ENCODE measurements at regions of chr5 and their contacts with region 1.

Region 1: DNA sequence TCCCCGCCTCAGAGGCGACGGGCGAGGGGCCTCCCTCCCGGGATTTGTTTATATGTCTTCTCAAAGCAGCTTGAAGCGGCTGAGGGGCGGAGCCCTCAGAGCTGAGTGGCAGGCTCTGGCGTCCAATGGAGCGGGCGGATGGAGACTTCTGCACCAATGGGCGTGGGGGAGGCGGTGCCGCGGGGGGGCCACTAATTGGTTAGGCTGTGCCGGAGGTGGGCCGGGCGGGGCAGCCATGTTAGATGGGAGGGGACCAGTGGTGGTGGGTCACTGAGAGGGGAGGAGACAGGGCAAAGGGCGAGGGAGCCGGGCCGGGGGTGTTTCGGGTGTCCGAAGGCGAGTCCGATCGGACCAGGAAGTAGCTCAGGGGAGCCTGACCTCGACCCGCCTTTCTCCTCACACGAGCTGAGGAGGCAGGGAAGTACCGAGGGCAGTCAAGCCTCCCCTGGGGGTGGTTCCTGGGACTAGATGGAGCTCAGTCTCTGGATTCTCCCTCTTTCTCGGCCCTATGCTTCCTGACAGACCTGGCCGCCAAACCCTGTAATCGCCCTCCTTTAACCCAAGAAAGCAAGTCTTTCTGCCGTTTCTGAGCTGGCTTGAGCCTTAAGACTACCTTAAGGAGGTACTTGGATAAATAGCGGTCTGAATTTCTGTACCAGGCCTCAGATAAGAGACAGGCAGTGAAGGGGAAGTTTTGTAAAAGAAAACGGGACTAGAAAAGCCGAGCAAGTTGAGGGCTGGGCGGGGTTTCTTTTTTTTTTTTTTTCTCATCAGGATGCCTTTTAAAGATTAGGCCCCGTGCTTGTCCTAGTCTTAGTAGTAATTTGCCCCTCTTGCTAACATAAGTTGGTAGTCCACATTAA is 1.1 kb downstream of the CREBRF start:
- DNase-seq: peak; percentile 99
- ATAC-seq: peak; percentile 81
- H3K4me3 ChIP-seq: peak overlapping the region; percentile 81 to 97 (median 89)
- H3K4me3 Mint-ChIP-seq: peak overlapping the region; percentile 96
- H3K27ac ChIP-seq: peak overlapping the region; percentile 82 to 100
- H3K27ac Mint-ChIP-seq: peak overlapping the region; percentile 96
- H3K4me1 ChIP-seq: peaks cover 19 to 26% of the 10 kb centered on the region in 2 donors
- H3K4me1 Mint-ChIP-seq: peaks cover 47% of the 10 kb centered on the region
- H3K27me3 ChIP-seq: no peaks in the 10 kb centered on the region
- H3K27me3 Mint-ChIP-seq: no peaks in the 10 kb centered on the region
- CTCF ChIP-seq: no peak

Region 2: DNA sequence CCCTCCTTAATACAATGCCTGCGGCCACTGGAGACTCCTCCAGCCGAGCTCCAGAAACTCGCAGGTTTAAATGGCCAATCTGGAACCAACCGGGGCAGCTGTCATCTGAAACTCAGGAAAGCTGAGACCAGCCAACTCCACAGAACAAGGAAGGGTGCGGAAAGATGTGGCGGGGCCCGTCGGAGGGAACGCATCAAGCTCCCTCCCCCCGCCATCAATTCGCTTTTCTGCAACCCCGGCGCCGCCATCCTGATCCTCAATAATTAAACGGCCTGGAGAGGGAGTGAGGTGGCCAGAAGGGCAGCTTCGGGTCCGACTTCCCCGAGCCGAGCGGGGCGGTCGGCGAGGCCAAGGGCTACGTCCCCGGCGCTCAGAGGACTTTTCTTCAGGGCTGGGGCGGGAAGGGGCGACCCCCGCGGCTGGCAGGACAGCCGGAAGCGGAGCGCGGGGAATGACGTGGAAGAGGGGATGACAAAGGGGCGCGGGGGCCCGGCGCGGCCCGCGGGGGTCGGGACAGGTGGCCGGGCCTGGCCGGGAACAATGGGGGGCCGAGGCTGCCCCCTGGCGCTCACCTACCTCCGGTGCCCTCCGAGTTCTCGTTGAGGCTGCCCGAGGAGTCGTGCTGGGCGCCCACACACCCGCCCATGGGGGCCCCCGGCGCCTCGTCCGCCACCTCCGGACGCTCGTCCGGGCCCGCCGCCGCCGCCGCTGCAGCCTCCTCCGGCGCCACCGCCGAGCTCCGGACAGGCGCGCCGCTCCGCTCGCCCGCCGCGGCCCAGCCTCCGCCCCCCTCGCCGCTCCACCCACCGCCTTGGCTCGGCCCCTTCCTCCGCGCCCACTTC is 774.1 kb before region 1 on chr5 and contains the start of gene UBTD2:
- CTCF ChIA-PET with region 1: no interaction called
- POLR2A ChIA-PET with region 1: no interaction called
- intact Hi-C with region 1: loop called (anchors 5 kb)
- DNase-seq: peak; percentile 91
- ATAC-seq: peak; percentile 84
- H3K4me3 ChIP-seq: peak within 1 kb of the TSS; percentile 38 to 87 (median 79)
- H3K4me3 Mint-ChIP-seq: peak within 1 kb of the TSS; percentile 93
- H3K27ac ChIP-seq: peak within 1 kb of the TSS in 1 of 2 donors; percentile 74
- H3K27ac Mint-ChIP-seq: peak within 1 kb of the TSS; percentile 83
- H3K4me1 ChIP-seq: peaks cover 16 to 17% of the 10 kb centered on the region in 2 donors
- H3K4me1 Mint-ChIP-seq: peaks cover 20% of the 10 kb centered on the region
- H3K27me3 ChIP-seq: no peaks in the 10 kb centered on the region
- H3K27me3 Mint-ChIP-seq: no peaks in the 10 kb centered on the region
- CTCF ChIP-seq: peak; percentile 72
- total RNA-seq, gene UBTD2: 9.2 and 10.6 TPM in 2 replicates

Region 3: DNA sequence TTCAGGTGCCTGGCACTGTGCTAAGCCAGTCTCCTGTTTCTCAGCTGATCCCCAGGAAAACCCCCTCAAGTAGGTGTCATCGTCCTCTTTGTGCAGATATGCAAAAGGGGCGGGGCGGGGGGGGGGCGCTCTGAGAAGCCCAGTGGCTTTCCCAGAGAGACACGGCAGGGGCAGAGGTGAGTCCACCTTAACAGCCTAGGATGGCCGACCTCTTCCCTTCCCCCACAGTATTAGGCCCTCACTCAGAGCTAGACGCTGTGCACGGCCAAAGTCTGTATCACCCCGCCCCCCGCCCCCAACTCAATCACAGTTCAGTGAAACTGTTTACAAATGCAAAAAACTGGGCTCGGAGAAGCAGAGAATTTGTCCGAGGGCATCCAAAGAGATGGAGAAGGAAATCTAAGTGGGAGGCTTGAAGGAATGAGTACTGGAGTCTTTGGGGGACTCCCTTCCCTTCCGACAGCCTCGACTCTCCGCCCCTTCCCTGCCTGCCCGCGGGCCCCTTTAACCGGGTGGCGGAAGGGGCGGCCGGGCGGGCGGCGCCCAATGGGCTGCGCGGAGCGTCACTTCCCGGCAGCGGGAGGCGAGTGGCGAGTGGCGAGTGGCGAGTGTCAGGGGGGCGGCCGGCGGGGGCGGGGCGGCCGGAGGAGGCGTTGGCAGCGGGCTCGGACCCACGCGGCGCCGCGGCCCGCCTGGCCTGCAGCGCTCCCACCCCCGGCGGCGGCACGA is 223.4 kb before region 1 on chr5 and contains the start of gene ERGIC1:
- CTCF ChIA-PET with region 1: no interaction called
- POLR2A ChIA-PET with region 1: no interaction called
- intact Hi-C with region 1: loop called (anchors 5 kb)
- DNase-seq: peak; percentile 86
- ATAC-seq: peak; percentile 74
- H3K4me3 ChIP-seq: peak within 1 kb of the TSS; percentile 62 to 90 (median 69)
- H3K4me3 Mint-ChIP-seq: peak within 1 kb of the TSS; percentile 90
- H3K27ac ChIP-seq: peak within 1 kb of the TSS; percentile 95 to 98
- H3K27ac Mint-ChIP-seq: peak within 1 kb of the TSS; percentile 96
- H3K4me1 ChIP-seq: peaks cover 42 to 52% of the 10 kb centered on the region in 2 donors
- H3K4me1 Mint-ChIP-seq: peaks cover 48% of the 10 kb centered on the region
- H3K27me3 ChIP-seq: no peaks in the 10 kb centered on the region
- H3K27me3 Mint-ChIP-seq: no peaks in the 10 kb centered on the region
- CTCF ChIP-seq: no peak
- total RNA-seq, gene ERGIC1: 132 and 140 TPM in 2 replicates

Region 4: DNA sequence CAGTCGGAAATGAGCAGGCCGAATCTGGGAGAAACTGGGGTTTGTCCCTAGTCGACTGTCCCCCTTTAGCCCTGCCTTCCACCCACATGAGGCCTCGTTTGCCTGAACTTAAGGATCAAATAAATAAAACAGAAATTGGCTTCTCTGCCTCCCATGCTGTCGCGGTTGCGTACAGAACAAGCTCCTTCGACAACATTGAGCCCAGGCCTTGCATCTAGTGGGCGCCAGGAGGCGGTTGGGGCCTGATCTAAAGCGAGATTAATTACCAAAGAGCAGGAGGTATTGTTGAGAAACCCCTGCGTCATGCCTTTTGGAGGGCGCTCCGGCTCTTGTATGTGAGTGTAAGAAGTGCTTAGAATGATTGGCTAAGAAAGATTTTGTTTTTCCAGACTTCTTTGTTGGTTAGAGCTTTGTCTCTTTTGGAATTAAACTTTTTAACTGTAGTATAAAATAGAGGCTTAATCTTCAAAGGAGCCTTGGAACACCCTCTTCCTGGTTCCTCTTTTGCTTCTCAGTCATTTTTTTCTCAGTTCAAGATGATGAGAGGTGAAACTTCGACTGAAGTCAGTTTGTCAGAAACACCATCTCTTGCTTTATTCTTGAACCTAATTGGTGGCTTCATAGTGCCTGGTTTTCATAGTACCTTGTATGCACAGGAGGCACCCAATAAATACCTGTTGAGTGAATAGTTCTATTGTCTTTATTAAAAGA is 72.9 kb before region 1 on chr5:
- CTCF ChIA-PET with region 1: interaction called, 17 read pairs
- POLR2A ChIA-PET with region 1: interaction called, 23 read pairs
- intact Hi-C with region 1: loop called (anchors 1 kb)
- DNase-seq: peak; percentile 82
- ATAC-seq: peak; percentile 56
- H3K4me3 ChIP-seq: peak overlapping the region; percentile 96 to 99 (median 96)
- H3K4me3 Mint-ChIP-seq: peak overlapping the region; percentile 98
- H3K27ac ChIP-seq: peak overlapping the region; percentile 93 to 97
- H3K27ac Mint-ChIP-seq: peak overlapping the region; percentile 99
- H3K4me1 ChIP-seq: peaks cover 15 to 23% of the 10 kb centered on the region in 2 donors
- H3K4me1 Mint-ChIP-seq: peaks cover 45% of the 10 kb centered on the region
- H3K27me3 ChIP-seq: no peaks in the 10 kb centered on the region
- H3K27me3 Mint-ChIP-seq: no peaks in the 10 kb centered on the region
- CTCF ChIP-seq: peak; percentile 70

Region 5: DNA sequence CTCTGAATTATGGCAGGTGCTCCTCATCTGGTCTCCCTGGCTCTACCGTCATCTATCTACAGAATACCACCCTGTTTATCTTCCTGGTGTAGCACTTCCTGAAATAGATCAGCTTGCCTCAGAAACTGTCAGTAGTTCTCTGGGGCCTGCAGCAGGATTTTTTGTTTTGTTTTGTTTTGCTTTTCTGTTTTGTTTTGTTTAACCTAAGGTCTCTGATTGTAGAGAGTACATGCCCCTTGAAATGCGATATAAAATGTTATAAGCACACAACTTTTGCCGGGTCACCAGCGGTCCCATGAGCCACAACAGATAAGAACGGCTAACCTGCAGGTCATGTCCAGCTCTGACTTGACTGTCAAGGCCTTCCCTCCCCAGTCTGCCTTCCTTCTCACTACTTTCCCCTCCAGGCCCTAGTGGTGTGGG is 27.8 kb before region 1 on chr5:
- CTCF ChIA-PET with region 1: no interaction called
- POLR2A ChIA-PET with region 1: interaction called, 10 read pairs
- intact Hi-C with region 1: no loop called
- DNase-seq: peak; percentile 30
- ATAC-seq: no peak
- H3K4me3 ChIP-seq: no peak overlapping the region
- H3K4me3 Mint-ChIP-seq: no peak overlapping the region
- H3K27ac ChIP-seq: peak overlapping the region; percentile 24 to 79
- H3K27ac Mint-ChIP-seq: no peak overlapping the region
- H3K4me1 ChIP-seq: peaks cover 27 to 34% of the 10 kb centered on the region in 2 donors
- H3K4me1 Mint-ChIP-seq: peaks cover 16% of the 10 kb centered on the region
- H3K27me3 ChIP-seq: no peaks in the 10 kb centered on the region
- H3K27me3 Mint-ChIP-seq: no peaks in the 10 kb centered on the region
- CTCF ChIP-seq: no peak

Region 6: DNA sequence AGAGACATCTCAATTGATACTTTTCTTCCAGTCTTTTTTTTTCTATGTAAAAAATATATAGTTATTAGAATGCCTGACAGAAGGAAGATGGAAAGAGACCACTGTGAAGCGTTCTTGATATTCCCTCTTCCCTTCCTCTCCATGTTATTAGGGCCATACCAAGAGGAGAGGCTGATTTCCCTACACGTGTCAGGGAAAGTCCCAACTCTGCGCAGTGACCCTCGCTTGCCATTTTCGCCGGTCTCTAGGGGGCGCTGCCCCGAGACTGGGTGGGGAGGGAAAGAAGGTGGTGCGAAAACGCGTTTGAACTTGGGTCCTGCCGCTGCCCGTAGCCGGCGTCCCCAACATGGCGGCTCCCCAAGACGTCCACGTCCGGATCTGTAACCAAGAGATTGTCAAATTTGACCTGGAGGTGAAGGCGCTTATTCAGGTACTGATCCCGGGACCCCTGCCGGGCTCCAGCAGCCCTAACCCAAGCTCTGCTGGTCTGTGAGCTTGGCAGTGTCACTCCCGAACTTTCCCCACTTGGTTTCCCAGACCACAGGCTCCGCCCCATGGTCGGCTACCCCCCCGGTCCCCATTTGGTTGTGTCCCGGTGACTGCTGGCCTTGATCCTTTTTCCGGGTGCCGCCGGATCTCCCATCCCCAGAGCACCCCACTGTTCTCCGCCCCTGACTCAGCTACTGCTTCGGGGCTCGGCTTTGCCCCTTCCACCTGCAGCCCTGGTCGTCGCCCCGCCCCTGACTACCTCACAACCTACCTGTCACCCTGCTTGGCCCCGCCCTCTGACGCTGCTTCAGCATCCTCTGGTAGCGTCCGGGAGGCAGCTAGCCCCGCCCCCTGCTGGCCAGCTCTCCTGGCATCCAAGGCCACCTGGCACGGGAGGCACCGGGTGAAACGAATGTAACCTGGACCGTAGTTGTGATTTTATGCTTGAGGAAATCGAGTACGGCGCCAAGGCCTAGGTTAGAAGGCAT is 87.2 kb after region 1 on chr5 and contains the start of gene BNIP1:
- CTCF ChIA-PET with region 1: interaction called, 4 read pairs
- POLR2A ChIA-PET with region 1: interaction called, 3 read pairs
- intact Hi-C with region 1: loop called (anchors 1 kb)
- DNase-seq: peak; percentile 97
- ATAC-seq: peak; percentile 90
- H3K4me3 ChIP-seq: peak within 1 kb of the TSS; percentile 79 to 100 (median 97)
- H3K4me3 Mint-ChIP-seq: peak within 1 kb of the TSS; percentile 98
- H3K27ac ChIP-seq: peak within 1 kb of the TSS; percentile 90 to 95
- H3K27ac Mint-ChIP-seq: peak within 1 kb of the TSS; percentile 98
- H3K4me1 ChIP-seq: peaks cover 3 to 8% of the 10 kb centered on the region in 2 donors
- H3K4me1 Mint-ChIP-seq: peaks cover 8% of the 10 kb centered on the region
- H3K27me3 ChIP-seq: no peaks in the 10 kb centered on the region
- H3K27me3 Mint-ChIP-seq: no peaks in the 10 kb centered on the region
- CTCF ChIP-seq: peak; percentile 81
- total RNA-seq, gene BNIP1: 8.0 and 10.0 TPM in 2 replicates

Measured in B cell (primary cell).